ENCODE measurements at regions of chr1 and their contacts with region 1.

Region 1: DNA sequence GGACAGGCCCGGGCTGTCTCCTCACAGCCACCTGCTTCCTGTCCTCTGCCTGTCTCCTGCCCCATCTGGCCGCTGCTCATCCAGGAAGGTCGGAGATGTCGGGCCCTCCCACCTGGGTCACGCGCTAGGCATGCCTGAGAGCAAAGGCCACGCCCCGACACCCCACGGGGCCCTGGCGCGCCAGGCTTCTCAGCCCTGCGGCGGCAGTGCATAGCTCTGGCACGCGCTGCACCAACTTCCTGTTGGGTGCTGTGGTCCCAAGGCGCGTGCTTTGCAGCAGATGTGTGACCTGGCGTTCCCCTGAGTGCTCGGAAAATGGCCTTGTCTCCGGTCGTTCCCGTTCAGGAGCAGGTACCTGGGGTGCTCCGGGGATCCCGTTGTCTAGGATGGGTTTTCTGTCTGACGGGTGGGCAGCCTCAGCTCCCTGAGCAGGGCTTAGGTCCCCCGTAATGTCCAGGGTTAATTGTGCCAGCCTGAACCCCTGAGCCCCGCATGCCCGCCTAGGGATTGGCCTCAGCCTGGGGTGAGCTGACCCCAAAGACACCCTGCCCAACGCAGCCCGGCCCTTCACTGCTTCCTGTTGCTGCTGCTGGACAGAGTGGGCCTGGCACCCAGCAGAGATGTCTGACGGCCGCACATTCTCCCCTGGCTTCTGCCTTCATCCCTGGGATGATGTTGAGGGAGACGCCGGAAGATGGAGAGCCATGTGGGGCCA is 19.4 kb upstream of the KCNAB2 start:
- DNase-seq: peak; percentile 92 to 97
- ATAC-seq: peak; percentile 67 to 89 (median 84)
- H3K4me3 ChIP-seq: peak overlapping the region; percentile 55
- H3K4me3 Mint-ChIP-seq: peak overlapping the region; percentile 93
- H3K27ac ChIP-seq: peak overlapping the region; percentile 95
- H3K27ac Mint-ChIP-seq: peak overlapping the region; percentile 70 to 100
- H3K4me1 ChIP-seq: peaks cover 66% of the 10 kb centered on the region
- H3K4me1 Mint-ChIP-seq: peaks cover 58 to 72% of the 10 kb centered on the region in 2 donors
- H3K27me3 ChIP-seq: no peaks in the 10 kb centered on the region
- H3K27me3 Mint-ChIP-seq: peaks cover 0 to 3% of the 10 kb centered on the region in 2 donors
- CTCF ChIP-seq: no peak

Region 2: GRCh38 chr1:5994713-5995621 is 31.3 kb before region 1 on chr1:
- intact Hi-C with region 1: loop called (anchors 1 kb)
- DNase-seq: peak in 1 of 2 donors; percentile 83
- ATAC-seq: peak; percentile 9 to 41 (median 15)
- H3K4me3 ChIP-seq: peak overlapping the region; percentile 29
- H3K4me3 Mint-ChIP-seq: peak overlapping the region; percentile 95
- H3K27ac ChIP-seq: peak overlapping the region; percentile 72
- H3K27ac Mint-ChIP-seq: peak overlapping the region; percentile 90 to 97
- H3K4me1 ChIP-seq: peaks cover 39% of the 10 kb centered on the region
- H3K4me1 Mint-ChIP-seq: peaks cover 33 to 59% of the 10 kb centered on the region in 2 donors
- H3K27me3 ChIP-seq: no peaks in the 10 kb centered on the region
- H3K27me3 Mint-ChIP-seq: no peaks in the 10 kb centered on the region
- CTCF ChIP-seq: no peak

Region 3: DNA sequence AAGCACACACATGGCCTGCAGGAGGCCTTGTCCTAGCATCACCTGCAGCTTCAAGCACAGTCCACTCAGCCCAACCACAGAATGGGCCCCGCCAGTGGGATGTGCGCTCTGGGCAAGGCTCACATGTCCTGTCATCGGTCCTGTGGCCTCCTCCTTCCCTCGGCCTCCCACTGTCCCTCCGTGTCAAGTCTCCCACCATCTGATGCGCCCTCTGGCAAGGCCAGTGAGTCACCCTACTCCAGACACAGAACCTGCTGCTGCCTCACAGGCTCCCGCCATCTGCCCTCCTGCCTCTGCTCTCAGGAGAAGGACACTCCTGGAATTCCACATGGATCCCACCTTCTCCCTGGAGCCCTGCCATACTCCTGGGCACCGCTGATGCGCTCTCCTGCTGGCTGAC is 33.6 kb after region 1 on chr1:
- intact Hi-C with region 1: no loop called
- DNase-seq: no peak
- ATAC-seq: no peak
- H3K4me3 ChIP-seq: no peak overlapping the region
- H3K4me3 Mint-ChIP-seq: no peak overlapping the region
- H3K27ac ChIP-seq: no peak overlapping the region
- H3K27ac Mint-ChIP-seq: peak overlapping the region; percentile 57 to 66
- H3K4me1 ChIP-seq: peaks cover 23% of the 10 kb centered on the region
- H3K4me1 Mint-ChIP-seq: peaks cover 37 to 43% of the 10 kb centered on the region in 2 donors
- H3K27me3 ChIP-seq: no peaks in the 10 kb centered on the region
- H3K27me3 Mint-ChIP-seq: no peaks in the 10 kb centered on the region
- CTCF ChIP-seq: no peak

Region 4: GRCh38 chr1:6330410-6330911 is 304.2 kb after region 1 on chr1:
- intact Hi-C with region 1: no loop called
- DNase-seq: no peak
- ATAC-seq: no peak
- H3K4me3 ChIP-seq: no peak overlapping the region
- H3K4me3 Mint-ChIP-seq: no peak overlapping the region
- H3K27ac ChIP-seq: no peak overlapping the region
- H3K27ac Mint-ChIP-seq: no peak overlapping the region
- H3K4me1 ChIP-seq: no peaks in the 10 kb centered on the region
- H3K4me1 Mint-ChIP-seq: no peaks in the 10 kb centered on the region
- H3K27me3 ChIP-seq: no peaks in the 10 kb centered on the region
- H3K27me3 Mint-ChIP-seq: no peaks in the 10 kb centered on the region
- CTCF ChIP-seq: no peak

Region 5: DNA sequence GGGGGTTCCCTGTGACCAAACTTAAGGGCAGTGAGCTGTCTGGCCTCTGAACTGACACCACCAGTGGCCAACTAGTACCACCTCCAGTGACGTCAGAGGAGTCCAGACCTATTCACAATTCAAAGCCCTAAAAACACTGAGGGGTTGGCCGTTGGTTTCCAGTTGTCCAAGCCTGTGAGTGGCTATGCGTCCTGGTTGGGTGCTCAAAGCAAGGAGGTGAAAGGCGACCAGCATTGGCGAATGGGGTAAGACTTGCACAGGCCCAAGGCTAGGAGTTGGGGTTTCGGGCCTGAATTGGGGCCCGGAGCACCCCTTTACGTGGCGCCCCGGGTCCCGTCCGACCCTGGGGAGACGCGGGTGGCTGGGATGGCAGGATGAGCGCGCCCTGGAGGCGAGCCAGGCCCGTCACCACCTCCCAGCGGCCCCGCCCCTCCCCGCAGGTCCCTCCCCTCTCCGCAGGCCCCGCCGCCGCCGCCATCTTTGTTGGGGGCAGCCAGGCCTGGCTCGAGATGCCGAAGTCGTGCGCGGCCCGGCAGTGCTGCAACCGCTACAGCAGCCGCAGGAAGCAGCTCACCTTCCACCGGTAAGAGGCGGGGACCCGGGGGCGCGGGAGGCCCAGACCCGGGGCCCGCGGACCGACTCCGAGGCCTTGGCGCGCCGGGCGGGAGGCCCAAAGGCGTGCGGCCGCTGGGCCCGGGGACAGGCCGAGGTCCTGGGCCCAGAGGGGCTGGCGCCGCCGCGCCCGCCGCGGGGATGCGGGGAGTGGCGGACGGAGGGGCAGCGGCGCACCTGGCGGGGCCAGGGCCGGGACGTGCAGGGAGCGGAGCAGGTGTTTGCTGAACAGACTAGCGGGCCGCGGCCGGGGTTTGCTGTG is 598.7 kb after region 1 on chr1 and contains the start of gene THAP3:
- intact Hi-C with region 1: no loop called
- DNase-seq: peak; percentile 82 to 93
- ATAC-seq: peak; percentile 97 to 98 (median 98)
- H3K4me3 ChIP-seq: peak within 1 kb of the TSS; percentile 57
- H3K4me3 Mint-ChIP-seq: peak within 1 kb of the TSS; percentile 90
- H3K27ac ChIP-seq: peak within 1 kb of the TSS; percentile 60
- H3K27ac Mint-ChIP-seq: peak within 1 kb of the TSS; percentile 61 to 84
- H3K4me1 ChIP-seq: peaks cover 23% of the 10 kb centered on the region
- H3K4me1 Mint-ChIP-seq: peaks cover 30 to 31% of the 10 kb centered on the region in 2 donors
- H3K27me3 ChIP-seq: no peaks in the 10 kb centered on the region
- H3K27me3 Mint-ChIP-seq: no peaks in the 10 kb centered on the region
- CTCF ChIP-seq: peak; percentile 41
- total RNA-seq, gene THAP3: 11.7 to 23.4 (median 23.1) TPM